ENCODE measurements at regions of chr2 and their contacts with region 1.

Region 1: GRCh38 chr2:37523814-37524362 is 147.6 kb downstream of the CDC42EP3 start:
- DNase-seq: peak; percentile 86
- H3K4me3 ChIP-seq: no peak overlapping the region
- H3K27ac ChIP-seq: peak overlapping the region; percentile 74 to 83 (median 79)
- H3K4me1 ChIP-seq: peaks cover 0 to 55% (median 37%) of the 10 kb centered on the region in 4 donors
- H3K27me3 ChIP-seq: no peaks in the 10 kb centered on the region
- CTCF ChIP-seq: no peak
- EP300 ChIP-seq: peak in 2 of 4 donors; percentile 9 to 53
- POLR2A ChIP-seq: no peak

Region 2: GRCh38 chr2:37615804-37616676 is 92.2 kb after region 1 on chr2:
- intact Hi-C with region 1: loop called (anchors 10 kb)
- DNase-seq: peak; percentile 69
- H3K4me3 ChIP-seq: no peak overlapping the region
- H3K27ac ChIP-seq: peak overlapping the region in 1 of 4 donors; percentile 85
- H3K4me1 ChIP-seq: peaks cover 0 to 58% (median 26%) of the 10 kb centered on the region in 4 donors
- H3K27me3 ChIP-seq: no peaks in the 10 kb centered on the region
- CTCF ChIP-seq: no peak
- EP300 ChIP-seq: no peak
- POLR2A ChIP-seq: no peak

Measured in sigmoid colon (tissue), 7 donors.